Endothelial cell of umbilical vein (primary cell): ENCODE measurements at regions of chr3 and their contacts with region 1.

Region 1: DNA sequence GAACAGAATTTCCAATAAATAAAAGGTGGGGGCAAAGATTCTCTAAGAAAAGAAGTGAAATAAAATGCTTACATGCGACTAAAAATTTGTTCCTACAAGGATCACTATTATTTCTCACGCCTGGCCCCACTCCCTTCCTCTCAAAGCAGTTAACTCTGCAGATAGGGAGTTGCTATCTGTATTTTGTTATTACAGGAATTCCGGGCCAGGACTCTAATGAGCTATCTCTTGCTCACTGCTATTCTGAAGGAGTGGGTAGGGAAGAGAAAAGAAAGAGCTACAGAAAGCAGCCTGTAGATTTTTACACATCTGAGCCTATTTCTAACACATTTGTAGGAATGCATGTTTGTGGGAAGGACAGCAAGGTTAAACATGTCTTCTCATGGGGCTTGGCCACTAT is 140.4 kb downstream of the PCCB start:
- DNase-seq: peak; percentile 78
- H3K4me3 ChIP-seq: no peak overlapping the region
- H3K27ac ChIP-seq: no peak overlapping the region
- H3K4me1 ChIP-seq: peaks cover 11% of the 10 kb centered on the region
- H3K27me3 ChIP-seq: no peaks in the 10 kb centered on the region
- CTCF ChIP-seq: no peak
- POLR2A ChIP-seq: no peak

Region 2: GRCh38 chr3:136075218-136075808 is 315.3 kb before region 1 on chr3:
- CTCF ChIA-PET with region 1: interaction called, 35 read pairs
- POLR2A ChIA-PET with region 1: interaction called, 4 read pairs
- dilution Hi-C with region 1: no loop called
- intact Hi-C with region 1: loop called (anchors 1 kb)
- DNase-seq: peak; percentile 81
- H3K4me3 ChIP-seq: no peak overlapping the region
- H3K27ac ChIP-seq: no peak overlapping the region
- H3K4me1 ChIP-seq: no peaks in the 10 kb centered on the region
- H3K27me3 ChIP-seq: no peaks in the 10 kb centered on the region
- CTCF ChIP-seq: peak; percentile 63 to 76
- POLR2A ChIP-seq: no peak

Region 3: DNA sequence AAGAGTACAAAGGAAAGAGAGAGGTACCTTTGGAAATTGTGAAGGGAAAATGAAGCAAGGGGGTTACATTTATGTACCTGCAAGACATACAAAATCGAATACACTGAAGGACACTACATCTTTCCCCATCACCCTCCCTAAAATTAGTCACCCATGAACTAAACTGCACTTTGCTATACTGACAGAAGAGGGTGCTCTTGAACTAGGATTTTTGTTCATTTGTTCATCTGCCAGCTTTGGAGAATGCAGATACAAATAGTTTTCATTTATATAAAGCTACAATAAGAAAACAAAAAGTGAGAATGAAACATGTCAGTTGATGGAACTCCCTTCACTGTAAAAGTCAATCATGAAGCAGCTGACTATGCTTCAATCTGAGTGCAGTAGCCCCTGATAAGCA is 84.7 kb before region 1 on chr3:
- CTCF ChIA-PET with region 1: interaction called, 16 read pairs
- POLR2A ChIA-PET with region 1: no interaction called
- dilution Hi-C with region 1: no loop called
- intact Hi-C with region 1: no loop called
- DNase-seq: peak; percentile 61
- H3K4me3 ChIP-seq: no peak overlapping the region
- H3K27ac ChIP-seq: no peak overlapping the region
- H3K4me1 ChIP-seq: no peaks in the 10 kb centered on the region
- H3K27me3 ChIP-seq: no peaks in the 10 kb centered on the region
- CTCF ChIP-seq: peak in 1 of 2 donors; percentile 39
- POLR2A ChIP-seq: no peak

Region 4: GRCh38 chr3:136404056-136404455 is 13.5 kb after region 1 on chr3:
- CTCF ChIA-PET with region 1: interaction called, 17 read pairs
- POLR2A ChIA-PET with region 1: no interaction called
- dilution Hi-C with region 1: no loop called
- intact Hi-C with region 1: no loop called
- DNase-seq: no peak
- H3K4me3 ChIP-seq: no peak overlapping the region
- H3K27ac ChIP-seq: no peak overlapping the region
- H3K4me1 ChIP-seq: no peaks in the 10 kb centered on the region
- H3K27me3 ChIP-seq: no peaks in the 10 kb centered on the region
- CTCF ChIP-seq: no peak
- POLR2A ChIP-seq: no peak

Region 5: GRCh38 chr3:136456196-136456595 is 65.6 kb after region 1 on chr3:
- CTCF ChIA-PET with region 1: no interaction called
- POLR2A ChIA-PET with region 1: no interaction called
- dilution Hi-C with region 1: no loop called
- intact Hi-C with region 1: no loop called
- DNase-seq: no peak
- H3K4me3 ChIP-seq: no peak overlapping the region
- H3K27ac ChIP-seq: no peak overlapping the region
- H3K4me1 ChIP-seq: no peaks in the 10 kb centered on the region
- H3K27me3 ChIP-seq: no peaks in the 10 kb centered on the region
- CTCF ChIP-seq: no peak
- POLR2A ChIP-seq: no peak

Region 6: GRCh38 chr3:136545664-136546268 is 155.2 kb after region 1 on chr3:
- CTCF ChIA-PET with region 1: interaction called, 13 read pairs
- POLR2A ChIA-PET with region 1: no interaction called
- dilution Hi-C with region 1: no loop called
- intact Hi-C with region 1: no loop called
- DNase-seq: peak; percentile 40
- H3K4me3 ChIP-seq: no peak overlapping the region
- H3K27ac ChIP-seq: no peak overlapping the region
- H3K4me1 ChIP-seq: peaks cover 26% of the 10 kb centered on the region
- H3K27me3 ChIP-seq: no peaks in the 10 kb centered on the region
- CTCF ChIP-seq: no peak
- POLR2A ChIP-seq: no peak